ENCODE measurements at regions of chr11 and their contacts with region 1.

Region 1: DNA sequence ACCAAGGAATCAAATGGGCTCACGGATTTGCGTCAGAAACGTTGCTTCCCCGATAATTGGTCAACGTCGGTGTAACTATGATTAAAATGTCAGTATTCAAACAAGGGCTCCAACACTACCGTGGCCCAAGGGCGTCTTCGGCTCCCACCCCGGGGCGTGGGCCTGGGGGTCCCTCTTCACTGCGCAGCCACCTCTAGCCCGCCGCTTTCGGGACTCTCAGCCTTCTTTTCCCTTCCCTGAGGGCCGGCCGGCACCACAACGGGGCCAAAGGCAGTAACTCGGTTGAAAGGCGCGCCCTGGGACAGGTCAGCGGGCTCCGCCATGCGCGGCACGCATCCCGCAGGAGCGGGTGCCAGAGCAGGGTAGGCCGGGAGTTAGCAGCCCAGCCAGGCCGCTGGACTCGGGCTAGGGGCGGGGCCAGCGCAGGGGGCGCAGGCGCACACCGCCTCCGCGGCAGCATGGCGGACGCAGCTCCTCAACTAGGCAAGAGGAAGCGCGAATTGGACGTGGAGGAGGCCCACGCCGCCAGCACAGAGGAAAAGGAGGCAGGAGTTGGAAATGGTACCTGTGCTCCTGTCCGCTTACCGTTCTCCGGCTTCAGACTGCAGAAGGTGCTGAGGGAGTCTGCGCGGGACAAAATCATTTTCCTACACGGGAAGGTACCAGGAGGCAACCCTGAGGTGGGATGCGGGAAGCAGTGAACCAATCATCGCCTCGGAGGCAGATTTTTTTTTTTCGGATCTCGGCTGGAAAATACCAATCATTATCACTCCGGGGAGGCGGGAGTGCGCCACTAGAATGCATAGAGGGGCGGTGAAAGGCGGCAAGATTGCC is at the start of gene DCPS:
- DNase-seq: peak; percentile 87
- H3K4me3 Mint-ChIP-seq: peak within 1 kb of the TSS; percentile 99
- H3K27ac Mint-ChIP-seq: peak within 1 kb of the TSS; percentile 98
- H3K4me1 Mint-ChIP-seq: peaks cover 27% of the 10 kb centered on the region
- H3K27me3 Mint-ChIP-seq: no peaks in the 10 kb centered on the region
- total RNA-seq, gene DCPS: 39.8 and 42.1 TPM in 2 replicates

Region 2: DNA sequence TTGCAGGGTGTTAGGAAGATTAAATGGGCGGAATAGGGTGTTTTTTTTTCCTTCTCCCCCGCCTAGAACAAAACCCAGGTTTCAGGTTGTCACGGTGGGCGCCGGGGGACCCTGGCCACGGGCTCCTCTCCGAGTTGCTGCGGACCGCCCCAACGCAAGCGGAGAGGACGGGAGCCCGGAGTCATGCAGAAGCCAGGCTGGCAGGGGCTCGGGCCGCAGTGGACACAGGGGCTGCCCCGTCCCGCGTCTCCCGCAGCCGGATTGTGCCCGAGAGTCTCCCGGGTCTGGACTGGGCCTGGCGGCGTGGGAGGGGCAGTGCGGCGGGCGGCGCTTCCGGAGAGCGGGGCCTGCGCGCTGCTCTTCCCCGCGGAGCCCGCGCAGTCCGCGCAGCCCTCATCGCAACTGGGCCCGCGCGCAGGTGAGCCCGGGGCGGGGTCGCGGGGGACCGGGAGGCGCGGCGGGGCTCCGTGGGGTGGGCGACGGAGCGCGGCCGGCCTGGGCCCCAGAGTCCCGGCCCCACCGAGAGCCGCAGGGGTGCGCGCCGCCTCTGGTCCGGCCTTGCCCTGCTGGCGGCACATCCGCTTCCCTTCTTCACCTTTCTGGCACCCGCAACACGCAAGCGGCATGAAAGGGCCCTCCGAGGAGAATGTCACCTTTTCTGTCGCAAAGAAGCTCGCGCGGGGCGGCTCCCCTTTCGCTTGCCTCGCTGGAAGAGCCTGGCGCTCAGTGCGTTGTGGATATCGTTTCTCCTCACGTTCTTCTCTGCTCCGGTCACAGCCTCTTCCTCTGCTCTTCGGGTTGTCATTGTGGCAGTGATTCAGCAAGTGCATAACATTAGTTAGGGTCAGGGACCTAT is 20.9 kb before region 1 on chr11 and contains the start of gene TIRAP:
- intact Hi-C with region 1: loop called (anchors 2 kb)
- DNase-seq: peak; percentile 55
- H3K4me3 Mint-ChIP-seq: peak within 1 kb of the TSS; percentile 99
- H3K27ac Mint-ChIP-seq: peak within 1 kb of the TSS; percentile 99
- H3K4me1 Mint-ChIP-seq: peaks cover 35% of the 10 kb centered on the region
- H3K27me3 Mint-ChIP-seq: no peaks in the 10 kb centered on the region
- total RNA-seq, gene TIRAP: 15.9 TPM in 2 replicates

Region 3: GRCh38 chr11:126419801-126420697 is 116.2 kb after region 1 on chr11:
- intact Hi-C with region 1: loop called (anchors 2 kb)
- DNase-seq: no peak
- H3K4me3 Mint-ChIP-seq: no peak overlapping the region
- H3K27ac Mint-ChIP-seq: no peak overlapping the region
- H3K4me1 Mint-ChIP-seq: peaks cover 28% of the 10 kb centered on the region
- H3K27me3 Mint-ChIP-seq: peaks cover 7% of the 10 kb centered on the region

Region 4: GRCh38 chr11:126843096-126843495 is 539.3 kb after region 1 on chr11:
- intact Hi-C with region 1: no loop called
- DNase-seq: no peak
- H3K4me3 Mint-ChIP-seq: no peak overlapping the region
- H3K27ac Mint-ChIP-seq: no peak overlapping the region
- H3K4me1 Mint-ChIP-seq: no peaks in the 10 kb centered on the region
- H3K27me3 Mint-ChIP-seq: no peaks in the 10 kb centered on the region